PC-3 (cell line): ENCODE measurements at regions of chr7 and their contacts with region 1.

Region 1: GRCh38 chr7:32559480-32559879 is 64.2 kb downstream of the AVL9 start:
- DNase-seq: no peak
- ATAC-seq: no peak
- H3K4me3 ChIP-seq: no peak overlapping the region
- H3K27ac ChIP-seq: no peak overlapping the region
- H3K4me1 ChIP-seq: no peaks in the 10 kb centered on the region
- H3K27me3 ChIP-seq: no peaks in the 10 kb centered on the region
- CTCF ChIP-seq: no peak

Region 2: GRCh38 chr7:32616625-32617024 is 57.1 kb after region 1 on chr7:
- CTCF ChIA-PET with region 1: no interaction called
- POLR2A ChIA-PET with region 1: no interaction called
- intact Hi-C with region 1: no loop called
- DNase-seq: peak; percentile 59
- ATAC-seq: peak; percentile 78
- H3K4me3 ChIP-seq: no peak overlapping the region
- H3K27ac ChIP-seq: no peak overlapping the region
- H3K4me1 ChIP-seq: peaks cover 3% of the 10 kb centered on the region; the same call in 1 of the 2 replicates
- H3K27me3 ChIP-seq: no peaks in the 10 kb centered on the region
- CTCF ChIP-seq: no peak

Region 3: GRCh38 chr7:33009734-33010133 is 450.3 kb after region 1 on chr7:
- CTCF ChIA-PET with region 1: no interaction called
- POLR2A ChIA-PET with region 1: interaction called, 10 read pairs
- intact Hi-C with region 1: no loop called
- DNase-seq: no peak
- ATAC-seq: no peak
- H3K4me3 ChIP-seq: no peak overlapping the region
- H3K27ac ChIP-seq: no peak overlapping the region
- H3K4me1 ChIP-seq: no peaks in the 10 kb centered on the region
- H3K27me3 ChIP-seq: no peaks in the 10 kb centered on the region
- CTCF ChIP-seq: no peak